ENCODE measurements at regions of chr15 and their contacts with region 1.

Region 1: GRCh38 chr15:33822479-33822878 is 145.8 kb upstream of the CHRM5 start:
- DNase-seq: no peak
- ATAC-seq: no peak
- H3K4me3 ChIP-seq: no peak overlapping the region
- H3K27ac ChIP-seq: no peak overlapping the region
- H3K4me1 ChIP-seq: no peaks in the 10 kb centered on the region
- H3K27me3 ChIP-seq: peaks cover 0 to 3% (median 0%) of the 10 kb centered on the region in 7 donors
- CTCF ChIP-seq: no peak

Region 2: GRCh38 chr15:33872416-33873106 is 50.1 kb after region 1 on chr15:
- intact Hi-C with region 1: no loop called
- DNase-seq: no peak
- ATAC-seq: peak in 1 of 8 donors; percentile 25
- H3K4me3 ChIP-seq: no peak overlapping the region
- H3K27ac ChIP-seq: no peak overlapping the region
- H3K4me1 ChIP-seq: peaks cover 0 to 4% (median 0%) of the 10 kb centered on the region in 9 donors
- H3K27me3 ChIP-seq: no peaks in the 10 kb centered on the region
- CTCF ChIP-seq: no peak

Region 3: DNA sequence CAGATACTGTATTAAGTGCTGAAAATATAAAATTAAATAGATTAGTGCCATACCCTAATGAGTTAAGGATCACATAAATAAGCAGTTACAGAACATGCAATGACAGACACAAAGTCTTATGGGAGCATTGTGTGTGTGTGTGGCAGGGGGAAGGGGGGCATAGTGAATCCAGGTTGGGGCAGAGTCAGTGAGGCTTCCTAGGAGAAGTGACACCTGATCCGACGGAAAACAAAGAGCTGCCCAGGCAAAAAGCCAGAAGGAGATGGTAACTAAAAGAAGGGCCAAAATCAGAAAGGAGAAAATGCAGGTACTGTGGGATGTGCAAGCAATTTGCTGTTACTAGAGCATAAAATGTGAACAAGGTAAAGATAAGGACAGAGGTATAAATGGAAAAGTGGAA is 65.7 kb after region 1 on chr15:
- intact Hi-C with region 1: no loop called
- DNase-seq: no peak
- ATAC-seq: no peak
- H3K4me3 ChIP-seq: no peak overlapping the region
- H3K27ac ChIP-seq: no peak overlapping the region
- H3K4me1 ChIP-seq: no peaks in the 10 kb centered on the region
- H3K27me3 ChIP-seq: no peaks in the 10 kb centered on the region
- CTCF ChIP-seq: no peak

Region 4: GRCh38 chr15:33934921-33935320 is 112.4 kb after region 1 on chr15:
- intact Hi-C with region 1: no loop called
- DNase-seq: no peak
- ATAC-seq: no peak
- H3K4me3 ChIP-seq: no peak overlapping the region
- H3K27ac ChIP-seq: no peak overlapping the region
- H3K4me1 ChIP-seq: peaks cover 0 to 6% (median 0%) of the 10 kb centered on the region in 9 donors
- H3K27me3 ChIP-seq: no peaks in the 10 kb centered on the region
- CTCF ChIP-seq: no peak

Region 5: DNA sequence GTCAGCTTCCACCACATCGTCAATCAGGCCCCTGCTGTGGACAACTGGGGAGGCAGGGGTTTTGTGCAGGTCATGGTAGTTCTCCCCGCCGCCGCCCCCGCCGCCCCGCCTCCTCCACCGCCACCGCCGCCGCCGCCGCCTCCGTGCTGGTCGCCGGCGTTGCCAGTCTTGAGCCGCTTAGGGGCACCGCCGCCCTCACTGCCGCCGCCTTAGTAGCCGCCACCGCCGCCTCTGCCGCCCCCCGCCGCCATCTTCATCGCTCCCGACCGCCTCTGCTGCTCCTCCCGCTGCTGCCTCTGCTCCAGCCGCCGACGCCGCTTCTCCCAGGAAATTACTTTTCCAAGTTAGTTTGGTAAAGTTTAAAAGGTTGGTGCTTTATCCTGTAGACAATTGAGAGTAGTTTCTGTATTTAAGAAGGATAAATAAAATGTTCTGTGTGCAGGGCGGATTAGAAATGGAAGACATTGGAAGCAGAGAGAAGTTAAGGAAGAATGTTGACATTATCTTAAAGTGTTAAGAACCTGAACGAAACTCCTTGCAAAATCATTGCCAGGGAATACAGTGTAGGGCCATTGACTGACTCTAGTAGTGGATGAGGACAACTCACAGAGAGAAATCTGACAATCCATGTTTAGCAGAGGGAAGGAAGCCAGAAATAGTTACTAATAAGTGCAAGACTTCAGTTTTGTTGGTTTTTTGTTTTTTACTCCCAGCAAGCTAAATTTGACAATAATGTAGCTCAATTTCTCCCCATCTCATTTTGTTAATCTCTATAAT is 668.1 kb after region 1 on chr15:
- intact Hi-C with region 1: loop called in 1 of 10 experiments (anchors 5 kb)
- DNase-seq: no peak
- ATAC-seq: no peak
- H3K4me3 ChIP-seq: no peak overlapping the region
- H3K27ac ChIP-seq: no peak overlapping the region
- H3K4me1 ChIP-seq: peaks cover 0 to 16% (median 0%) of the 10 kb centered on the region in 9 donors
- H3K27me3 ChIP-seq: peaks cover 0 to 64% (median 47%) of the 10 kb centered on the region in 7 donors
- CTCF ChIP-seq: no peak